Endothelial cell of umbilical vein (primary cell): ENCODE measurements at regions of chrX and their contacts with region 1.

Region 1: DNA sequence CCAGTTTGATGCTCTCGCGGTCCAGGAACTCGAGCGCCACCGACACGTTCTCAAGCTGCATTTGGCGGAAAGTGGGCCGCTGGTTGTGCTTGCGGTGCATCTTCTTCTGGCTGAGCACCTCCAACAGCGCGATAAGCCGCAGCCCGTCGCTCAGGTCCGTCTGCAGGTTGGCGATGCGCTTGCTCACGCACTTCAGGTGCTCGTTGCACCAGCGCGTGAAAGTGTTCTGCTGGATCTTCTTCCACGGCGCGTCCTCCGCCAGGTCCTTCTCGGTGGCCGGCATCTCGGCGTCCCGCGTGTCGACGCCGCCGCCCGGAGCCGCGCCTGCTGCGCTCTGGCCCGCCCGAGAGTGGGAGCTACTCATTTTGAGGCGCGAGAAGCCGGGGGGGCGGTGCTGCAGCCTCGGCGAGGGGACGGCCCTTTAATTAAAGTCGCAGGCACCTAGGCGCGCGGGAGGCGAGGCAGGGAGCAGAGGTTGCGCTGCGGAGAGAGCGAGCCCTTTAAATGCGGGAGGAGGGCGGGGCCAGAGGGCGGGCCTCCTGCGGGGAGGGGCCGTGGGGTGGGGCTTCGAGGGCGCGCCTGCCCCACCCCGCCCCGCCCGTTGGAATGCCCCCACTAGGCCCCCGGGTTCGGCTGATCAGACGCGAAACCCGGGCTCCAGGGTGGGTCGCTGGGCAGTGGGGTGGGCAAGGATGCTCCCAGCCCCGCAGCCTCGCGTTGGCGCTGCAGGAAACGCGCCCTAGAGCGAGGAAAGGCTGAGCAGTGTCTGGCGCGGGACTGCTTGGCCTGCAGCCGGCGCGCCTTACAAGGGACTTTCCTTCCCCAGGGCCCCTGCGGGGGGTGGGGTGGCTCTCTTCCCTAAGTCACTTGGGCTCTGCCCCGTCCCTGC is 3.3 kb downstream of the FLNA start:
- DNase-seq: peak; percentile 91
- H3K4me3 ChIP-seq: peak overlapping the region; percentile 82 to 99 (median 91)
- H3K27ac ChIP-seq: peak overlapping the region; percentile 91
- H3K4me1 ChIP-seq: peaks cover 30% of the 10 kb centered on the region
- H3K27me3 ChIP-seq: no peaks in the 10 kb centered on the region
- CTCF ChIP-seq: no peak
- POLR2A ChIP-seq: peak; percentile 98

Region 2: GRCh38 chrX:154384284-154384892 is 13.3 kb after region 1 on chrX:
- CTCF ChIA-PET with region 1: interaction called, 16 read pairs
- POLR2A ChIA-PET with region 1: interaction called, 4 read pairs
- dilution Hi-C with region 1: no loop called
- intact Hi-C with region 1: no loop called
- DNase-seq: no peak
- H3K4me3 ChIP-seq: no peak overlapping the region
- H3K27ac ChIP-seq: no peak overlapping the region
- H3K4me1 ChIP-seq: no peaks in the 10 kb centered on the region
- H3K27me3 ChIP-seq: no peaks in the 10 kb centered on the region
- CTCF ChIP-seq: peak; percentile 30 to 44
- POLR2A ChIP-seq: no peak

Region 3: GRCh38 chrX:154526901-154527675 is 156.0 kb after region 1 on chrX:
- CTCF ChIA-PET with region 1: interaction called, 24 read pairs
- POLR2A ChIA-PET with region 1: no interaction called
- dilution Hi-C with region 1: no loop called
- intact Hi-C with region 1: no loop called
- DNase-seq: peak; percentile 71
- H3K4me3 ChIP-seq: peak overlapping the region in 1 of 3 experiments; percentile 22
- H3K27ac ChIP-seq: peak overlapping the region; percentile 22
- H3K4me1 ChIP-seq: peaks cover 4% of the 10 kb centered on the region
- H3K27me3 ChIP-seq: no peaks in the 10 kb centered on the region
- CTCF ChIP-seq: peak; percentile 37 to 43
- POLR2A ChIP-seq: no peak

Region 4: GRCh38 chrX:154534862-154535670 is 163.9 kb after region 1 on chrX:
- CTCF ChIA-PET with region 1: interaction called, 24 read pairs
- POLR2A ChIA-PET with region 1: no interaction called
- dilution Hi-C with region 1: no loop called
- intact Hi-C with region 1: loop called (anchors 1 kb)
- DNase-seq: peak; percentile 63
- H3K4me3 ChIP-seq: no peak overlapping the region
- H3K27ac ChIP-seq: no peak overlapping the region
- H3K4me1 ChIP-seq: no peaks in the 10 kb centered on the region
- H3K27me3 ChIP-seq: no peaks in the 10 kb centered on the region
- CTCF ChIP-seq: peak; percentile 92 to 94
- POLR2A ChIP-seq: no peak